ENCODE measurements at regions of chr5 and their contacts with region 1.

Region 1: DNA sequence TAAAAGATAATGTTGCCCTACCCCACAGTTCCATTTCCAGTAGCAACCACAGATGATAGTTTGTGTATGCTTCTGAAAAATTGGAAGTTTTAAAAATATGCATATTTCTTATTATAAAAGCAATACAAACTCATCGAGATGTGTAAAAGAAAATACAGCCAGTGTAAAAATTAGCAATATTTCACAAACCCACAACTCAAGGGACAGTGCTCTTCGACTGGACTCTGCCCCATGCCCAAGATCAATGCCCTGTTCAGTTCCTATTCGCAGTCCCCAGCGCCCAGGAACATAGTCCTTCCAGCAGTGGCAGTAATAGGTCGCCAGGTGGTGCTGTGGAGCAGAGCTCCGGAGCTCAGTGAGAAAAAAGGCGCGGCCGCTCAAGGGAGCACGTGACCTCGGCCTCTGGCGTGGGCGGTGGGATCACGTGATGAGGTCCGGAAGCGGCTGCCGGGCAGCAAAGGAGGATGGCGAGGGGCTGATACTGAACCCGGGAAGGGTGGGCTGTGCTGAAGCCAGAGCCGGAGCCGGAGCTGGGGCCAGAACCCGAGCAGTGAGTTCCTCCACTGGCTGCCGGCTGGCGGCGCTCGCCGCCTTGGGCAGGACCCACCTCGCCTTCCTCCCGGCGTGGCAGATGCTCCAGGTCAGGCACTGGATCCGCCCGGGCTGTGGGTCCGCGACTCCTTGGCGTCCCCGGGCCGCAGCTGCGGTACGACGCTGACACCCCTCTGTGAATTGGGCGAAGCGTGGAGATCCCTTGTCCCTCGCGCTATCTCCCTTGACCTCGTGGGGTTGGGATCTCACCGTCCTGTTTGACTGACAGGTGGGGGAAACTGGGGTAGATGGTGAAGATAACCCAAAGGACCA is at the start of gene SLC36A1:
- DNase-seq: peak; percentile 89
- H3K4me3 ChIP-seq: peak within 1 kb of the TSS; percentile 24 to 68 (median 57)
- H3K27ac ChIP-seq: no peak within 1 kb of the TSS
- H3K4me1 ChIP-seq: peaks cover 12% of the 10 kb centered on the region
- H3K27me3 ChIP-seq: peaks cover 3 to 7% of the 10 kb centered on the region in 2 experiments
- CTCF ChIP-seq: peak; percentile 96 to 98
- POLR2A ChIP-seq: peak; percentile 64
- total RNA-seq, gene SLC36A1: 8.6 and 11.8 TPM in 2 replicates

Region 2: DNA sequence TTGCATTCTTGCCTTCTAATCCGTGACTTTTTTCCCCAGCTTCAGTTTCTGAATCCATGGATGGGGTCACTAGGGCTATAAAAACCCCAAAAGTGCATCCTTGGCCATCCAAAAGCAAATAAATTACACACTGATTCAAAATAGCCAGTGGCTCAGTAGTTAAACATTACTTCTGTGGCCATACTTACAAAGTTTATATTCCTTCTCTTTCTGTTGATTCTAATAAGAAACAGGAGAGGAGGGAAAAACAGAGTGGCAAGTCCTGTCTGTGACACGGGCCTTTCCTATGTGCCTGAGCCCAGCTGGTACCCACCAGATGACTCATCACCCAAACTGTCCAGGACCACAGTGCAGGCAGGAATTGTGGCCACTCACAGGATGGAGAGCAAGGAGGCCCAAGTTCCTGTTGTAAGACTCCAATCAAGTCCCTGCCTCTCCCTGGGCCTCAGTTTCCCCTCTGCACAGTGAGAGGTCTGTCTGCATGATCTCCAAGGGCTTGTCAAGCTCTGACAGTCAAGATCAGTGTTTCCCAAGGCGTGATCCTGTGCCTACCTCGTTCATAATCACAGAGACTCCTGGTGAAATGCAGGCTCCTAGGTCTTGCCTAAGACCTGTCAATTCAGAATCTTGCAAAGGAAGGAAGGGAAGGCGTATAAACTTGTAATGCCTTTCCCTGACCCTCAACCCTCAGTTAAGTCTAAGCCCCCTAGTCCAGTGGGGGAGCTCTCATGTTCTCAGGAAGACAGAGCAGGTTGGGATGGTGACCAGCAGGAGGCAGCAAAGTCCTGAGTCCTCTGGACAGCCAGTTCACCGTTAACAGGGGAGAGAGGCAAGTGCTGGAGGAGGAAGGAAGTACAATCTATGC is 396.1 kb before region 1 on chr5:
- CTCF ChIA-PET with region 1: no interaction called
- POLR2A ChIA-PET with region 1: no interaction called
- dilution Hi-C with region 1: no loop called
- intact Hi-C with region 1: no loop called
- DNase-seq: peak; percentile 81
- H3K4me3 ChIP-seq: no peak overlapping the region
- H3K27ac ChIP-seq: no peak overlapping the region
- H3K4me1 ChIP-seq: no peaks in the 10 kb centered on the region
- H3K27me3 ChIP-seq: no peaks in the 10 kb centered on the region
- CTCF ChIP-seq: peak; percentile 86 to 91
- POLR2A ChIP-seq: no peak

Region 3: DNA sequence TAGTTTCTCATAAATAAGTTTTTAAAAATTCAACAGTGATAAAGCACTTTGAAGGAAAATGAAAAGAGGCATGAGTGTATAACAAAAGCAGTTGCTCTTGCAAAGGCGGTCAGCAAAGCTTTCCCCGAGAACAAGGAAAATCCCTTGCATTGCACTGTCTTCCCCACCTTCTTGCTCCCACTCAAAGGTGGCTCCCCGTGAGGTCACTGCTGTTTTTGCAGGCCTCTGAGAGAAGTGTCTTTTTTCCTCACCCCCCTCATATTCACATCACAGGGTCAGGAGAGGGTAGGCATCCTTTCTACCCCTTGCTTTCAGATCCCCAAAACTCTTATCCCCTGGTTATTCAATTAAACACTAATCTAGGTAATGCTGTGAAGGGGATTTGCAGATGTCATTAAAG is 15.2 kb before region 1 on chr5:
- CTCF ChIA-PET with region 1: interaction called, 15 read pairs
- POLR2A ChIA-PET with region 1: no interaction called
- dilution Hi-C with region 1: no loop called
- intact Hi-C with region 1: no loop called
- DNase-seq: no peak
- H3K4me3 ChIP-seq: no peak overlapping the region
- H3K27ac ChIP-seq: no peak overlapping the region
- H3K4me1 ChIP-seq: no peaks in the 10 kb centered on the region
- H3K27me3 ChIP-seq: peaks cover 4 to 10% of the 10 kb centered on the region in 2 experiments
- CTCF ChIP-seq: no peak
- POLR2A ChIP-seq: no peak

Region 4: DNA sequence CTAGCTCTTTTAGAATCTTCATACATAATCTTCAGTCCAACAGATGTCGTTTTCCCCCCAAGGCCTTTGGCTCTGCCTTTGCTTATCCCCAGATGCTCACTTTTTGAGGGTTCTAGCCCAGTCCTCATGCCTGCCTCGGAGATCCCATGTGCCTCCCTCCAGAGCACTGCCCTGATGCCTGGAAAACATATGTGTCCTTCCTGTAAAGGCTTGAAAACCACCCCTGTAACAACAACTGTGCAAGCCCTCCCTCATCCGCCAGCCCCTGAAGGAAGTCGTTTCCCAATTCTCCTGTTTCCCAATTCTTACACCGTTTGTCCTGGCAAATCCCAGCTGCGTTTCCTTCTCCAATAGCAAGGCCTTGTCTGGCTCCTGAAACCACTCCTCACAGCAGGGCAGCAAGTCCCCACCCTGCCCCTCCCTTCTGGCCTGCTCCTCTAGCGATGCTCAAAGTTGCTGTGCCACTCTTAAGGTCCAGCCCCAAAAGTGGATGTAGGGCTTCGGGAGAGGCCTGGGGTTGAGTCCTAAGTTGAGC is 52.2 kb after region 1 on chr5:
- CTCF ChIA-PET with region 1: interaction called, 33 read pairs
- POLR2A ChIA-PET with region 1: no interaction called
- dilution Hi-C with region 1: no loop called
- intact Hi-C with region 1: loop called (anchors 1 kb)
- DNase-seq: no peak
- H3K4me3 ChIP-seq: no peak overlapping the region
- H3K27ac ChIP-seq: no peak overlapping the region
- H3K4me1 ChIP-seq: no peaks in the 10 kb centered on the region
- H3K27me3 ChIP-seq: no peaks in the 10 kb centered on the region
- CTCF ChIP-seq: no peak
- POLR2A ChIP-seq: no peak

Region 5: GRCh38 chr5:151523335-151523734 is 75.9 kb after region 1 on chr5:
- CTCF ChIA-PET with region 1: interaction called, 98 read pairs
- POLR2A ChIA-PET with region 1: no interaction called
- dilution Hi-C with region 1: no loop called
- intact Hi-C with region 1: loop called (anchors 1 kb)
- DNase-seq: peak; percentile 52
- H3K4me3 ChIP-seq: no peak overlapping the region
- H3K27ac ChIP-seq: no peak overlapping the region
- H3K4me1 ChIP-seq: no peaks in the 10 kb centered on the region
- H3K27me3 ChIP-seq: peaks cover 0 to 2% of the 10 kb centered on the region in 2 experiments
- CTCF ChIP-seq: peak; percentile 53 to 57
- POLR2A ChIP-seq: no peak

Region 6: GRCh38 chr5:151651997-151652645 is 204.7 kb after region 1 on chr5:
- CTCF ChIA-PET with region 1: interaction called, 267 read pairs
- POLR2A ChIA-PET with region 1: interaction called, 6 read pairs
- dilution Hi-C with region 1: no loop called
- intact Hi-C with region 1: loop called (anchors 1 kb)
- DNase-seq: peak; percentile 80
- H3K4me3 ChIP-seq: no peak overlapping the region
- H3K27ac ChIP-seq: no peak overlapping the region
- H3K4me1 ChIP-seq: no peaks in the 10 kb centered on the region
- H3K27me3 ChIP-seq: peaks cover 0 to 4% of the 10 kb centered on the region in 2 experiments
- CTCF ChIP-seq: peak; percentile 88 to 92
- POLR2A ChIP-seq: no peak

Region 7: GRCh38 chr5:151771259-151772028 is 324.0 kb after region 1 on chr5 and contains the start of gene G3BP1:
- CTCF ChIA-PET with region 1: interaction called, 11 read pairs
- POLR2A ChIA-PET with region 1: no interaction called
- dilution Hi-C with region 1: no loop called
- intact Hi-C with region 1: loop called (anchors 1 kb)
- DNase-seq: peak; percentile 100
- H3K4me3 ChIP-seq: peak within 1 kb of the TSS; percentile 62 to 85 (median 65)
- H3K27ac ChIP-seq: peak within 1 kb of the TSS; percentile 75
- H3K4me1 ChIP-seq: peaks cover 32% of the 10 kb centered on the region
- H3K27me3 ChIP-seq: no peaks in the 10 kb centered on the region
- CTCF ChIP-seq: peak; percentile 74
- POLR2A ChIP-seq: peak; percentile 96
- total RNA-seq, gene G3BP1: 255 and 262 TPM in 2 replicates

Region 8: GRCh38 chr5:152124409-152125041 is 677.1 kb after region 1 on chr5:
- CTCF ChIA-PET with region 1: no interaction called
- POLR2A ChIA-PET with region 1: no interaction called
- dilution Hi-C with region 1: no loop called
- intact Hi-C with region 1: no loop called
- DNase-seq: no peak
- H3K4me3 ChIP-seq: no peak overlapping the region
- H3K27ac ChIP-seq: no peak overlapping the region
- H3K4me1 ChIP-seq: no peaks in the 10 kb centered on the region
- H3K27me3 ChIP-seq: no peaks in the 10 kb centered on the region
- CTCF ChIP-seq: no peak
- POLR2A ChIP-seq: no peak

Measured in endothelial cell of umbilical vein (primary cell).